K562 (cell line): ENCODE measurements at regions of chr7 and their contacts with region 1.

Region 1: DNA sequence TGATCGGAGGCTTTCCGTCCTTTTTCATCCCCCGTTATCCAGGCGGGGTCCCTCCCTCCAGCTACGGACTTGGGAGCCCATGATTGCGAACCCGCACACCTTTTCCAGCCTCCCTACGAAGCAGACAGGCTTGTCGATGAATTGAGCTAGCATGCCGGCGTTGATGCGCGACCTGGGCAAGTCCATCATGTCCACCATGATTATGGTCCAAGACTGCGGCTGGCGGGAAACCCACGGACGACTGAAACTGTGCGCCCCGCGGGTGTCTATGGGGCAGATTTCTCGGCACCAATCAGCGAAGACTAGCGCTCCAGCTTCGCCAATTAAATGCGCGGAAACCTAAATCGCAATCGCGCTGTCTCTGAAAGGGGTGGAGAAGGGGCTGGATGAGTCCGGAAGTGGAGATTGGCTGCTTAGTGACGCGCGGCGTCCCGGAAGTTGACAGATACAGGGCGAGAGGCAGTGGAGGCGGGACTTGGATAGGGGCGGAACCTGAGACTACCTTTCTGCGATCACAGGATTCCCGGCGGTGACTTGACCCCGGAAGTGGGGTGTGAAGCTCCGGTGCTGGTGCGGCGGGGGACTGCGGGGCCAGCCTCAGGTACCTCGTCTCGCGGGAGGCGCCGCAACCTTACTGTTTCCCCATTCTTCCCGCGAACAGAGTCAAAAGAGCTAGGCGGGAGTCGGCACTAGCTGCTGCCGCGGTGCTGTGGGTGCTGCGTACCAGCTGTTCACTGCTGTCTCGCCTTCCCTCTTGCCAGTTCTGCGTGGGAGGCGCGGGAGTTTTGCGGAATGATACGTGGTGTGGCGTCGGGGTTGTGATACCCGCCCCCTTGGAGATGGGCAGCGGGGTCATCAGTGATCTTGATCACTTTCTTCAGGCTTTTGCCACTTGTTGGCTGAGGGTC is at the start of gene UMAD1:
- DNase-seq: peak; percentile 90 to 100 (median 92)
- ATAC-seq: peak; percentile 95
- H3K4me3 ChIP-seq: peak within 1 kb of the TSS; percentile 62
- H3K27ac ChIP-seq: peak within 1 kb of the TSS; percentile 87
- H3K4me1 ChIP-seq: peaks cover 0 to 3% of the 10 kb centered on the region in 2 experiments; a peak in 1 of 5 replicates
- H3K27me3 ChIP-seq: no peaks in the 10 kb centered on the region
- CTCF ChIP-seq: 0 out of 6 replicates have a peak, but pooled peaks of 1 of the 3 experiments have one; percentile 5
- EP300 ChIP-seq: peak; percentile 3; the same call in 1 of the 2 replicates
- POLR2A ChIP-seq: peak; percentile 91
- RAD21 ChIP-seq: 0 out of 4 replicates have a peak, but pooled peaks of 1 of the 2 experiments have one; percentile 16
- polyA plus RNA-seq, gene UMAD1: 11.6 to 13.9 TPM

Region 2: DNA sequence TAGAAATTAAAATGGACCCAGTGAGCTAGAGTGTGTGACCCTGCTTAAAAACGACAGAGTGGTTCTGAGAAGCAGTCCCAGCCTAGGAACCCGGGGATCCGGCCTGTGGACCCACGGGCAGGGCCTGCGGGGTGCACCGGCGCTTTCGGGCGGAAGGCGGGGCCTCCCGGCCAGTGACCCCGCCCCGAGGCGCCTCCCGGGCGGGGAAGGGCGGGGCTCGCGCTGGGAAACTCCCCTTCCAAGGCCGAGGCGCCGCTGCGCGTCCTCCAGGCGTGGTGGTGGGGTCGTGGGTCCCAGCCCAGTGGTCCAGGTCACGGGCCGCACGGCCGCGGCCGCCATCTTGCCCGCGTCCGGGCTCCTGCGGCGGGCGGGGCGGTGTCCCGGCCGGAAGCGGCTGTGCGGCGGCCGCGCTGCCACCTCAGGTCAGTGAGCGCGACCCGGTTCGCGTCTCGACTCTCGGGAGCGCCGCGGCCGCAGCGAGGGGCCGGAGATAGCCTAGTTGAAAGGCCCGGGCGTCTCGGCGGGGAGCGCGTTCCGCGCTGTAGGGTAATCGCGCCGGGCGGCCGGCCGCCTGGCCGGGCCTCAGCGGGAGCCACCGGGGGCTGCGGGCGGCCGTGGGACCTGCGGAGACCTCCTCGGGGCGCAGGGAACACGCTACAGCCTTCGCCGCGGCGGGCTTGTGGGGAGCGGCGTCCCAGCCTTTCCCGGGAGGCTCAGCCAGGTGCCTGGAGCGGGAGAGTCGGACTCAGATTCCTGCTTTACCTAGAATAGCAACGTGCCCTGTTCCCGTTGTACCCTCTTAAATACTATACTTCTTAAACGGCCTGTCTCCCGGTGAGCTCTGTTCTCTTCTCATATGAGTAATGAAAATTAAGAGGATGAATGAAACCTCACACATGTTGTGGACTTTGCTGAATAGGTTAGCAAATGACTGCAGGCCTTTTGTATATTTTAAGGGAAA is 73.5 kb before region 1 on chr7 and contains the start of gene MIOS:
- CTCF ChIA-PET with region 1: no interaction called
- POLR2A ChIA-PET with region 1: no interaction called
- in situ Hi-C with region 1: no loop called
- intact Hi-C with region 1: loop called (anchors 2 kb)
- DNase-seq: peak; percentile 91 to 97 (median 96)
- ATAC-seq: peak; percentile 97
- H3K4me3 ChIP-seq: peak within 1 kb of the TSS; percentile 81
- H3K27ac ChIP-seq: peak within 1 kb of the TSS; percentile 86
- H3K4me1 ChIP-seq: peaks cover 10 to 14% of the 10 kb centered on the region in 2 experiments; a peak in 4 of 5 replicates
- H3K27me3 ChIP-seq: no peaks in the 10 kb centered on the region
- CTCF ChIP-seq: no peak
- EP300 ChIP-seq: no peak; the same call in 1 of the 2 replicates
- POLR2A ChIP-seq: peak; percentile 71
- RAD21 ChIP-seq: no peak
- polyA plus RNA-seq, gene MIOS: 7.8 to 12.1 TPM

Region 3: DNA sequence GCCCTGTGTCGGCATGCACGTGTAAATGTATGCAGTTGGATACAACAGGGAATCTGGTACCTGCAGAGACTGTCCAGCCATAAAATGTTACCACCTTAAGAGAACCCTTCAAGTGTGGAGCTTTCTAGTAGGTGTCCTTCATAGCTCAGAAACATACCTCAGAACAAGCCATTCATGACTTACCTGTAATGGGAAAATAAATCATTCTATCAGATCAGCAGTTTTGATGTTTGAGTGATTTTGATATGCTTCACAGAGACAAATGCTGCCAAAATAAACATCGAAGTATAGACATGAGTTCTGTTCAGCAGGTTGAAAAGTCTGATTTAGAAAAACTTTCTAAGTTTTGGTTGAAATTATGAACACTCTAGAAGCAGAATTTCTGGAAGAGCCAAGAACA is 33.5 kb before region 1 on chr7:
- CTCF ChIA-PET with region 1: no interaction called
- POLR2A ChIA-PET with region 1: no interaction called
- in situ Hi-C with region 1: no loop called
- intact Hi-C with region 1: no loop called
- DNase-seq: no peak
- ATAC-seq: no peak
- H3K4me3 ChIP-seq: no peak overlapping the region
- H3K27ac ChIP-seq: no peak overlapping the region
- H3K4me1 ChIP-seq: no peaks in the 10 kb centered on the region
- H3K27me3 ChIP-seq: no peaks in the 10 kb centered on the region
- CTCF ChIP-seq: no peak
- EP300 ChIP-seq: no peak
- POLR2A ChIP-seq: no peak
- RAD21 ChIP-seq: no peak